ENCODE measurements at regions of chr12 and their contacts with region 1.

Region 1: GRCh38 chr12:67441736-67442346 is 172.7 kb downstream of the CAND1 start:
- DNase-seq: peak; percentile 85
- H3K4me3 ChIP-seq: no peak overlapping the region
- H3K27ac ChIP-seq: no peak overlapping the region
- H3K4me1 ChIP-seq: peaks cover 5% of the 10 kb centered on the region
- CTCF ChIP-seq: peak; percentile 93

Region 2: DNA sequence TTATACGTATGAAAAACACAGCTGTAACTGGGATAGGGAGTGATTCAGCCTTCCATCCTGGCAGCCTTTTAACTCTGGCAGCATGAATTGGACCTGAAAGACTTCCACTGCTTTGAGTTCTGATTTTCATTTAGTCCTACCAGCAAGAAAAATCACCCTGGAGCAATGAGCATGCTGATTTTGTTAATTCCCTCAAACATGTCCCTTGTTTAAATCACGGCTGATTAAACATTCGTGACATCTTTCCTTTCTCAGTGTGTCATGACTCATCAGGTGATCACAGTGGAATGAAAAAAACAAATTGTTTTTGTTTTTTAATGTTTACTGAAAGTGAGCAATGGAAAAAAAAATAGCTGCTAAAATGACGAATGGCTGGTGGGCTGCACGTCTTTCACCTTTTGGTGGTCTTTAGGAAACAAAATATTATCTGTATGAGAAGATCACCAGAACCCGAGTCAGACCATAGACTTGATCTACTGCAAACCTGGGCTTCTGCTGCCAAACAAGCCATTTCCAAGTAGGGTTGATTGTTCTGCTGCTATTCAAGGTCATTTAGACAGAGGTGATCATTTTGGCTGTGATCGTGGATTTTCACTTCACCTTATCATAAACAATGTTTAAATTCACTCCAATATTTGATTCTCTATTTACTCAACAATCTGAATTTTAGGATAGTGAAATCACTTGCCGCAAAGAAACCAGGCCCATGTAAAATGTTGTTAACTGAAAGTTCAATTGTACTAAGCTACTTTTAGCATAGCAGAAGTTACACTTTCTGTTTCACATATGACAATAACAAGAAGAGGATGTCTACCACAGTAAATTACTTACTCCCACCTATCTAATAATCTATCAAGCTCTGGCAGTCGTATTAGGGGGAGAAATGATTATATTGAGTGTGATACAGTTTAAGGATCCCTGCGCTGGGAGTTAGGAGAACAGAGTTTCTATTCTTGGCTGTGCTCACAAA is 239.5 kb before region 1 on chr12:
- CTCF ChIA-PET with region 1: no interaction called
- POLR2A ChIA-PET with region 1: no interaction called
- intact Hi-C with region 1: no loop called
- DNase-seq: no peak
- H3K4me3 ChIP-seq: no peak overlapping the region
- H3K27ac ChIP-seq: no peak overlapping the region
- H3K4me1 ChIP-seq: no peaks in the 10 kb centered on the region
- CTCF ChIP-seq: no peak

Region 3: DNA sequence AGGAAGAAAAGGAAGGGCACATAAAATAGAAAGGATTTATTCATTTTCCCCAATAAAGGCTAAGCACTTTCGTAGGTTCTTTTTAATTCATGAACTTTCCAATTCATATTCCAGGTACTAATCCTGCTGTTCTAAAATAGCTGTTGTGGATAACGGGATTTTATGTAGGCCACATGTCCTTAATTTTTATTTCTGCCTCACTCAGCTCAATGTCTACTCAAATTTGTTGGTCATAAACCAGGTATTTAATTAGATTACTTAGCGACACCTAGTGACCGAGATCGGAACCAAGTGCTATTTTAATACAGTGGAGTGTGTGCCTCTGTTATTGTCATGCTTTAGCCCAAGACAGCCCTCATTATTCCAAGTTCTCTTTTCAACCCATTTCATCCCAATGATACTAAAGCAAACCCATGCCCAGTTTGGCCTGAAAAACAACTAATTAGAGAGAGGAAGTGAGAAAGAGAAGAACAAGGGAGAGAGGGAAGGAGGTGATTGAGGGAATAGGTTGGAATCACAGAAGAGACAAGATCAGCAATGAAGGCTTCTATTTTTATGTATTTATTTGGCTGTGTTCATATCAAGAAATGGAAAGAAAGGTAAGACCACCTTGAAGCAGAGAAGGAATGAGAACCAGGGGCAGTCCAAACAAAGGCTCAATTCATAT is 501.5 kb after region 1 on chr12:
- CTCF ChIA-PET with region 1: no interaction called
- POLR2A ChIA-PET with region 1: no interaction called
- intact Hi-C with region 1: loop called (anchors 5 kb)
- DNase-seq: peak; percentile 83
- H3K4me3 ChIP-seq: no peak overlapping the region
- H3K27ac ChIP-seq: no peak overlapping the region
- H3K4me1 ChIP-seq: peaks cover 5% of the 10 kb centered on the region
- CTCF ChIP-seq: peak; percentile 95